Body of pancreas (tissue), 4 donors: ENCODE measurements at regions of chr15 and their contacts with region 1.

Region 1: DNA sequence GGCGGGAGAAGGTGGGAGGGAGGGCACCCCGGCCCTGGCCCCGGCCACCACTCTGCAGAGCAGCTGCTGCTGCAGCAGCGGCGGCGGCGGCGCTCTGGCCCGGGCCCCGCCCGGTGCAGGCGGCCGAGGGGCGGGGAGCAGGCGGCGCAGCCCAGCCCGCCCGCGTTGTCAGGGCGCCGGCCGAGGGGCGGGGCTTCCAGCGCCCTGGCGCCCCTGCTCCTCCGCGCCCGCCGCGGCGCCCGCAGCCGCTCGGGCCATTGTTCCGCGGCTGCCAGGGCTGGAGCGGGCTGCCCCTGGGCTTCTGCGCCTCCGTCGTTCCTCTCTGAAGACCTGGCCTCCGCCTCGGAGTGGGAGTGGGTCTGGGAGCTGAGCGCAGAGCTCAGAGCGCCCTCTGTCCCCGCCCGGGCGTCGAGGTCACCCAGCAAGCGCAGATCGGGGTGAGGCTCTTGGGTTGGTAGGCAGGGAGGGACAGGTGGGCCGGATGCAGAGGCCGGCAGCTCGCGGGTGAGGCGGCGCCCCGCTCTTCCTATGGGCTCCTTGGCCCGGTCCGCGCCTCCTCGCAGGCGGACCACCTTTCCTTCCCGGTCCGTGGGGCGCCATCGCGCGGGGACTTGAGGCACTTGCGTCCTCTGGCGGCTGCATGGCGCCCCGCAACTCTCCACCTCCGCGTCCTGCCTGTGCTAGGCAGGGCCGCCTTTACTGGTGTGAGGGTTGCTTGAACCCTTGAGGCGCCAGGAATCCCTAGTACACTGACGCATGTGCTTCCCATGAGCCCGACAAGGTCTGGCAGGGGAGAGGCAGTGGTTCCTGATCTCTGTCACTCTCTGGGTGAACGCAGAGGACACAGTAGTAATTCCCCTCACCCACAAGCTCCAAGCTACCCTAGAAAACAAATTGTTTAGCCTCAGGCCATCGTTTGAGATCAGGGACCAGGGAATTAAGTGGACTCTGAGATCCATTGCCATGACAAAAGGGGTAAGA is at the start of gene LPCAT4:
- DNase-seq: peak; percentile 84 to 89 (median 86)
- ATAC-seq: peak; percentile 93
- H3K4me3 ChIP-seq: peak within 1 kb of the TSS; percentile 86 to 90
- H3K27ac ChIP-seq: peak within 1 kb of the TSS; percentile 74 to 96 (median 92)
- H3K4me1 ChIP-seq: peaks cover 20% of the 10 kb centered on the region
- H3K27me3 ChIP-seq: no peaks in the 10 kb centered on the region
- CTCF ChIP-seq: peak; percentile 87 to 98 (median 94)
- POLR2A ChIP-seq: peak; percentile 56 to 80 (median 76)
- total RNA-seq, gene LPCAT4: 13.5 to 16.5 TPM

Region 2: DNA sequence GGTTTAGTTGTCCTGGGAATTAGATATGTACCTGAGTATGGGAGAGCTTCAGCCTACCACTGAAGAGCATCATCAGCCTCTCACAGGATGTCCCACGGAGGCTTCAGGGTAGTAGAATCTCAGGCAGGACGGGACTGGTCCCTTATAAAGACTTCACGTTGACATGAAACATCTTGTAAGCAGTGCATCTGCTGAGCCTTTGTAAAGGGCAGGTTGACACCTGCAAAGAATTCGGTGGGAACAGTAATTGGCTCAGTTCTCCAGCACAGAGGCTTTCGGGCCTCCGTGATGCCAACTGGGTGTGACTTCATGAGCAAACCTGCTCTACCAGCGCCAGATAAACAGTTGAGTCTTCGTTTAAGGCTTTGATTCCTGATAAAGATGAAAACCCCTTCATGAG is 301.4 kb before region 1 on chr15:
- intact Hi-C with region 1: loop called (anchors 10 kb)
- DNase-seq: no peak
- ATAC-seq: no peak
- H3K4me3 ChIP-seq: no peak overlapping the region
- H3K27ac ChIP-seq: no peak overlapping the region
- H3K4me1 ChIP-seq: no peaks in the 10 kb centered on the region
- H3K27me3 ChIP-seq: no peaks in the 10 kb centered on the region
- CTCF ChIP-seq: no peak
- POLR2A ChIP-seq: no peak